MCF 10A (cell line): ENCODE measurements at regions of chr11 and their contacts with region 1.

Region 1: DNA sequence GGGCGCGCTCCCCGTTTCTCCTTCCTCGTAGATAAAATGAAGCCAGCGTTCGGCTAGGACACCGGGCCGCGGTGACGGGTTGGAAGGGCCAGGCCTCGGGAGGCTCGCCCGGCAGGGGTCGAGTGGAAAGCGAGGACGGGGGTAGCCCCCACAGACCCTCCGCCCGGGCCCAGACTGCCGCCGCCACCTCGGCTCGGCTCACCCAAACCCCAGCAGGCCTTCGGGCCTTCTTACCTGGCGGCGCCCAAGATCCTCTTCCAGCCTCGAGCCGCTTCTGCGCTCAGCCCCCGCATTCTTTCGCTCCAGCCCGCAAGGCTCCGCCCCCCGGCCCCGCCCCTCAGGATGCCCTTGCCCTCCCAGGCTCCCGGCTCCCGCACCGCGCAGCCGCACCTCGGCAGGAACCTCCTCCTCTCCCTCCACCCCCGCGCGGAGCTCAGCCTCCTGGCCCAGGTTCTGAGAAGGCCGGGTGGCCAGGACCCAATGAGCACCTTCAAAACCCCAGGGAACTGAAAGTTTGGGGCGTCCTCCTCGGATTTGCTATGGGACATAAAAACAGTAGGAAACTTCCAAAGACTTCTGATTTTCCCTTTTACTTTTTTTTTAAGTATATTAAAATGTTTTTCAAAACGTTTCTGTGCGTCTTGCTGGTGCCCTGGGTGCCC is at the start of gene CD59:
- DNase-seq: peak; percentile 96
- H3K4me3 Mint-ChIP-seq: peak within 1 kb of the TSS; percentile 88
- H3K27ac Mint-ChIP-seq: peak within 1 kb of the TSS; percentile 90
- H3K4me1 Mint-ChIP-seq: peaks cover 49% of the 10 kb centered on the region
- H3K27me3 Mint-ChIP-seq: no peaks in the 10 kb centered on the region
- CTCF ChIP-seq: no peak
- total RNA-seq, gene CD59: 597 and 618 TPM in 2 replicates

Region 2: GRCh38 chr11:33333816-33334215 is 402.5 kb before region 1 on chr11:
- CTCF ChIA-PET with region 1: no interaction called
- POLR2A ChIA-PET with region 1: no interaction called
- intact Hi-C with region 1: no loop called
- DNase-seq: no peak
- H3K4me3 Mint-ChIP-seq: no peak overlapping the region
- H3K27ac Mint-ChIP-seq: no peak overlapping the region
- H3K4me1 Mint-ChIP-seq: peaks cover 5% of the 10 kb centered on the region
- H3K27me3 Mint-ChIP-seq: no peaks in the 10 kb centered on the region
- CTCF ChIP-seq: no peak

Region 3: GRCh38 chr11:33695051-33695566 is 41.2 kb before region 1 on chr11:
- CTCF ChIA-PET with region 1: interaction called, 7 read pairs
- POLR2A ChIA-PET with region 1: interaction called, 73 read pairs
- intact Hi-C with region 1: loop called (anchors 1 kb)
- DNase-seq: no peak
- H3K4me3 Mint-ChIP-seq: no peak overlapping the region
- H3K27ac Mint-ChIP-seq: no peak overlapping the region
- H3K4me1 Mint-ChIP-seq: peaks cover 54% of the 10 kb centered on the region
- H3K27me3 Mint-ChIP-seq: no peaks in the 10 kb centered on the region
- CTCF ChIP-seq: no peak

Region 4: DNA sequence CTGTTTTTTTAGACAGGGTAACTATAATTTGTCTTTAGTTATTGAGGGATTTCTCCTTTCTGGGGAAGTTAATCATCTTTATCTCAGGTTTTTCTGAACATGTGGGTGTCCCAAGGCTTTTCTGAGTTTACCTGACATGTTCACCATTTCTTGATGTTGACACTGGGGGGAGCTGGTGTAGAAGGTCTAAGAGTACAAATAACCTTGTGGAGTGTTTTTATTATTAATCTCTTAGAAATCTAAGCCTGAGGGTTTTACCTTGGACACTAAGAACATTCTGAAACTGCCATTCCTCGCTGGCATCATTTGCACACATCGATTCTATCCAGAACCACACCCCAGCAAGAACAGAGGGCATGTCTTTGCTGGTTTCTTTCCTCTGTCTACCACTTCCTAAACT is 20.0 kb before region 1 on chr11:
- CTCF ChIA-PET with region 1: interaction called, 85 read pairs
- POLR2A ChIA-PET with region 1: interaction called, 409 read pairs
- intact Hi-C with region 1: loop called (anchors 1 kb)
- DNase-seq: peak; percentile 86
- H3K4me3 Mint-ChIP-seq: peak overlapping the region; percentile 53
- H3K27ac Mint-ChIP-seq: peak overlapping the region; percentile 78
- H3K4me1 Mint-ChIP-seq: peaks cover 31% of the 10 kb centered on the region
- H3K27me3 Mint-ChIP-seq: no peaks in the 10 kb centered on the region
- CTCF ChIP-seq: peak; percentile 45

Region 5: DNA sequence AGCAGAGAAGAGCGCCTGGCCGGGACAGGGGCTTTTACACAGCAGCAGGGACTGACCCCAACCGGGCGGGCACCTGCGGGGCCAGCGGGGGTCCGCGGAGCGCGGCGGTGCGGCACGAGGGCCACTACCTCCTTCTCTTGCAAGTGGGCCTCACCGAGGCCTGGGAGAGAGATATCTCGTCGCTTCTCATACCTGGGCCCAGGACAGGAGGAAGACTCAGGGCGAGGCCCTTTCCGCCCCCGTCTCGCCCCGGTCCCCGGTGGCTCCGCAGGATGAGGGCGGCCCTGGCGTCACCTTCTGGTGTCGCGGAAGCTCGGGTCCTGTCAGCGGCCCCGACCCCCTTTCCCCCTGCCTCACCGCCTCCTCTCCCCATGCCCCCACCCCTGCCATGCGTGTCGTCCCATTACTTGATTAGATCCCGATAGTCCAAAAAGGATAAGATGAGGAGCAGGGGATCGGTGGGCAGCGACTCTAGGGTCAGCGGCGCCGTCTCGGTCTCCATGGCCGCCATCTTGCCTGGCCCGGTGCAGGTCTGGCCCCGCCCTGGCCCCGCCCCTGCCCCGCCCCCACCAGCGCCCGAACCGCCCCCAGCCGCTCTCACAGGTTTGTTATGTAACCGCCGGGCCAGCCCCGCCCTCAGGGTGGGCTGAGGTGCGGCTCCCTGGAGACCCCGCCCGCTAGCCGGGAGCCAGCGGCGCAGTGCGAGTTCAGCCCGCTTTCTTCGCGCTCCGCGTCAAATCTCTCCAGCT is 37.9 kb after region 1 on chr11 and contains the start of gene FBXO3:
- CTCF ChIA-PET with region 1: no interaction called
- POLR2A ChIA-PET with region 1: interaction called, 27 read pairs
- intact Hi-C with region 1: no loop called
- DNase-seq: peak; percentile 85
- H3K4me3 Mint-ChIP-seq: peak within 1 kb of the TSS; percentile 88
- H3K27ac Mint-ChIP-seq: peak within 1 kb of the TSS; percentile 93
- H3K4me1 Mint-ChIP-seq: peaks cover 25% of the 10 kb centered on the region
- H3K27me3 Mint-ChIP-seq: no peaks in the 10 kb centered on the region
- CTCF ChIP-seq: no peak
- total RNA-seq, gene FBXO3: 20.1 and 22.7 TPM in 2 replicates